ENCODE measurements at regions of chr1 and their contacts with region 1.

Region 1: GRCh38 chr1:197924516-197925123 is 7.4 kb downstream of the LHX9 start:
- DNase-seq: peak; percentile 61
- H3K4me3 ChIP-seq: no peak overlapping the region
- H3K27ac ChIP-seq: no peak overlapping the region
- H3K4me1 ChIP-seq: peaks cover 3% of the 10 kb centered on the region
- CTCF ChIP-seq: peak; percentile 91

Region 2: GRCh38 chr1:197399755-197400527 is 524.7 kb before region 1 on chr1:
- CTCF ChIA-PET with region 1: interaction called, 3 read pairs
- POLR2A ChIA-PET with region 1: no interaction called
- intact Hi-C with region 1: loop called (anchors 1 kb)
- DNase-seq: peak; percentile 56
- H3K4me3 ChIP-seq: no peak overlapping the region
- H3K27ac ChIP-seq: no peak overlapping the region
- H3K4me1 ChIP-seq: no peaks in the 10 kb centered on the region
- CTCF ChIP-seq: peak; percentile 82

Region 3: GRCh38 chr1:197521118-197521739 is 403.4 kb before region 1 on chr1:
- CTCF ChIA-PET with region 1: interaction called, 3 read pairs
- POLR2A ChIA-PET with region 1: no interaction called
- intact Hi-C with region 1: loop called (anchors 2 kb)
- DNase-seq: peak; percentile 45
- H3K4me3 ChIP-seq: no peak overlapping the region
- H3K27ac ChIP-seq: no peak overlapping the region
- H3K4me1 ChIP-seq: no peaks in the 10 kb centered on the region
- CTCF ChIP-seq: peak; percentile 91

Region 4: GRCh38 chr1:197614916-197615692 is 309.5 kb before region 1 on chr1:
- CTCF ChIA-PET with region 1: no interaction called
- POLR2A ChIA-PET with region 1: no interaction called
- intact Hi-C with region 1: loop called (anchors 1 kb)
- DNase-seq: peak; percentile 53
- H3K4me3 ChIP-seq: no peak overlapping the region
- H3K27ac ChIP-seq: no peak overlapping the region
- H3K4me1 ChIP-seq: peaks cover 10% of the 10 kb centered on the region
- CTCF ChIP-seq: peak; percentile 92

Region 5: DNA sequence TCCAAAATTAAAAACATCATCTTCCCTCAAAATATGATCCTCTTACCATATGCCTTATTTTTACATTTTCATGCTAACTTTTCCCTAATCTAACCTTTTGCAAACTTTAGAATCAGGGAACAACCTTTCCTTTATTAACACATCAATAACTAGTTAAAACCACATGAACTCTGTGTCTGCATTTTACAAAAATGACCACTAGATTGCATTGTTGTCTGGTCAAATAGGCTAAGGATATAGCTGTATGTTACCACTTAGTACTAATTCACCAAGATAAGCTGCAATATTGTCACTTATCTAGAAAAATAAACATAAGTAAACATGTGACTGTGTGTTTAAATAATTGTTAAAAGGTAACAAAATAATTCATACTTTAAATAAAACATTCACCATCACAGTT is 231.7 kb before region 1 on chr1:
- CTCF ChIA-PET with region 1: no interaction called
- POLR2A ChIA-PET with region 1: no interaction called
- intact Hi-C with region 1: loop called (anchors 5 kb)
- DNase-seq: peak; percentile 19
- H3K4me3 ChIP-seq: no peak overlapping the region
- H3K27ac ChIP-seq: no peak overlapping the region
- H3K4me1 ChIP-seq: peaks cover 8% of the 10 kb centered on the region
- CTCF ChIP-seq: peak; percentile 73

Region 6: GRCh38 chr1:197868751-197869489 is 55.7 kb before region 1 on chr1:
- CTCF ChIA-PET with region 1: no interaction called
- POLR2A ChIA-PET with region 1: interaction called, 4 read pairs
- intact Hi-C with region 1: loop called (anchors 2 kb)
- DNase-seq: peak; percentile 74
- H3K4me3 ChIP-seq: no peak overlapping the region
- H3K27ac ChIP-seq: no peak overlapping the region
- H3K4me1 ChIP-seq: no peaks in the 10 kb centered on the region
- CTCF ChIP-seq: peak; percentile 95

Region 7: DNA sequence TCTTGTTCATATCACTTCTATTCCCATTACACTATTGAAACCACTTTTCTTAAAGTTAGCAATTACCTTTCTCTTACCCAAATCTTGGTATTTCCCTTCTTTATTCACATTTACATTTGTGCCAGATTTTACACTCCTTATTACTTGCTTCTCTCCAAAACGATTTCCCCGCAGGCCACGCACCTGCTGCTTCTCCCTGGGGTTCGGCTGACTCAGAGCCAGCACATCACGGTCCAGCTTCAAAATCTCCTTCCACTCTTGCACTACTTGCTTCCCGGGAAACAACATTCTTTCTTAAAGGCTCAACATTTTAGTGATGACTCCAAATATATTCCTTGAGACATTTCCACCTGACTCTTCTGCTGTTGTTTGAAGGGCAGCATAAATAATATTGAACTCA is 13.3 kb after region 1 on chr1:
- CTCF ChIA-PET with region 1: no interaction called
- POLR2A ChIA-PET with region 1: no interaction called
- intact Hi-C with region 1: no loop called
- DNase-seq: no peak
- H3K4me3 ChIP-seq: no peak overlapping the region
- H3K27ac ChIP-seq: no peak overlapping the region
- H3K4me1 ChIP-seq: no peaks in the 10 kb centered on the region
- CTCF ChIP-seq: no peak

Measured in OCI-LY7 (cell line).